SK-N-SH (cell line): ENCODE measurements at regions of chr1 and their contacts with region 1.

Region 1: GRCh38 chr1:167442124-167442848 is 76.0 kb downstream of the CD247 start:
- DNase-seq: peak; percentile 91
- H3K4me3 ChIP-seq: peak overlapping the region in 1 of 2 experiments; percentile 42; a peak in 1 of 4 replicates
- H3K27ac ChIP-seq: no peak overlapping the region
- H3K4me1 ChIP-seq: peaks cover 0 to 7% of the 10 kb centered on the region in 2 experiments; a peak in 1 of 4 replicates
- H3K27me3 ChIP-seq: no peaks in the 10 kb centered on the region; the same call in 1 of the 2 replicates
- CTCF ChIP-seq: peak; percentile 89
- EP300 ChIP-seq: no peak
- RAD21 ChIP-seq: peak; percentile 94

Region 2: DNA sequence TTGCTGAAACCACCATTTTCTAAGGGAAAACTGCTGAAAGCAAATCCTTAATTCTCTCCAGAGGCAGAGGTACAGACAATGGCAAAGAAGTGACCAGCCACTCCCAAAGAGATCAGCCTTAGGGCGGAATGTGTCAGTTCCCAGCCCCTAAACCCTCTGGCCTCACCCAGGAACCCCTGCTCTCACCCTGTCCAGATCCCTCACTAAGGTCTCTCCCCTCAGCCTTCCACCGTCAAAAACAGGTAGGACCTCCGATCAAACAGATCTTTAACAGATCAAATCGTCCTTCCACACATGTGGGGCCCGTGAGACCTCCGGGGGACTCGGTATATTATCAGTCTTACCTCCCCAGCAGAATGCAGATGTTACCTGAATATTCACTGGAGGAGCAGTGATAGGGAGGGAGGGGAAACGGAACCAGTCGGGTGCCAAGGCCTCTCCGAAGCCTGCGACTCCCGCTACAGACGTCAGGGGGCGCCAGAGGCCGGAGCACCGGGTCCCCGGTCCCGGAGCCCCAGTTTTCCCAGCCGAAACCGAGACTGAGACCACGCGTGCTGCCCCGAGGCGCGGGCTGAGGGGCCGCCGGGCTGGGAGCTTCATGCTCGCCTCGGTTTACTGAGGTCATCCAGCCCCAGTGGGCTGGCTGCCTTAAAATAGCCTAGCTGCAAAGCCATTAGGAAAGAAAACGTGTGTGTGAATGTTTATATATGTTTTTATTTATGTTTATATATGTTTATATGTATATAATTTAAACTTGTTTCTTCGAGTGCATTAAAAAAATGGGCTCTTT is 375.8 kb before region 1 on chr1:
- CTCF ChIA-PET with region 1: interaction called, 32 read pairs
- POLR2A ChIA-PET with region 1: no interaction called
- DNase-seq: peak; percentile 91
- H3K4me3 ChIP-seq: peak overlapping the region; percentile 30 to 47; a peak in 3 of 4 replicates
- H3K27ac ChIP-seq: no peak overlapping the region
- H3K4me1 ChIP-seq: no peaks in the 10 kb centered on the region; a peak in 2 of 4 replicates
- H3K27me3 ChIP-seq: no peaks in the 10 kb centered on the region; the same call in 1 of the 2 replicates
- CTCF ChIP-seq: peak; percentile 94
- EP300 ChIP-seq: no peak
- RAD21 ChIP-seq: peak; percentile 96

Region 3: GRCh38 chr1:167263819-167264464 is 178.3 kb before region 1 on chr1:
- CTCF ChIA-PET with region 1: interaction called, 110 read pairs
- POLR2A ChIA-PET with region 1: no interaction called
- DNase-seq: no peak
- H3K4me3 ChIP-seq: no peak overlapping the region
- H3K27ac ChIP-seq: no peak overlapping the region
- H3K4me1 ChIP-seq: peaks cover 0 to 3% of the 10 kb centered on the region in 2 experiments; a peak in 2 of 4 replicates
- H3K27me3 ChIP-seq: no peaks in the 10 kb centered on the region
- CTCF ChIP-seq: no peak
- EP300 ChIP-seq: no peak
- RAD21 ChIP-seq: no peak

Region 4: GRCh38 chr1:167360120-167360519 is 82.2 kb before region 1 on chr1:
- CTCF ChIA-PET with region 1: no interaction called
- POLR2A ChIA-PET with region 1: no interaction called
- DNase-seq: no peak
- H3K4me3 ChIP-seq: no peak overlapping the region
- H3K27ac ChIP-seq: no peak overlapping the region
- H3K4me1 ChIP-seq: peaks cover 0 to 2% of the 10 kb centered on the region in 2 experiments; a peak in 1 of 4 replicates
- H3K27me3 ChIP-seq: no peaks in the 10 kb centered on the region
- CTCF ChIP-seq: no peak
- EP300 ChIP-seq: no peak
- RAD21 ChIP-seq: no peak

Region 5: DNA sequence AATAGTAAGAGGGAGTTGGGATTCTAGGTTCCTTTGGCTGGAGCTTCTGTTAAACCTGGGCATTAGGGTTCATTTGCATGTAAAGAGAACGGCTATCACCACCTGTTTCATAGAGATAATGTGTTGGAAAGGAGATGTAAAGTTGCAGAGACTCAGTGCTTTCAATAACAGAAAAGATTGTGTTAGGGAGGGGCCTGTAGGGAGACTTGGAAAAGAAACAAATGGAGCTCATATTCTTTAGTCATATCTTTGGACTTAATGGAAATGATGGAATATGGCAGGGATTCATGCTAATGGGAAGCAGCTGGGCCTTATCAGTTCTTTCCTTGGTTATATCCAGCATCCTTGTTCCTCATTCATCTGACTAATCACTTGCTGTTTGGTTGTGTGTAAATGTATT is 68.9 kb before region 1 on chr1:
- CTCF ChIA-PET with region 1: interaction called, 13 read pairs
- POLR2A ChIA-PET with region 1: no interaction called
- DNase-seq: peak; percentile 65
- H3K4me3 ChIP-seq: no peak overlapping the region; a peak in 1 of 4 replicates
- H3K27ac ChIP-seq: peak overlapping the region in 1 of 2 experiments; percentile 78; a peak in 2 of 4 replicates
- H3K4me1 ChIP-seq: peaks cover 0 to 7% of the 10 kb centered on the region in 2 experiments; a peak in 2 of 4 replicates
- H3K27me3 ChIP-seq: no peaks in the 10 kb centered on the region
- CTCF ChIP-seq: no peak
- EP300 ChIP-seq: peak in 1 of 2 experiments; percentile 66; a peak in 2 of 4 replicates
- RAD21 ChIP-seq: no peak; the same call in 1 of the 2 replicates

Region 6: GRCh38 chr1:167401260-167401873 is 40.9 kb before region 1 on chr1:
- CTCF ChIA-PET with region 1: interaction called, 35 read pairs
- POLR2A ChIA-PET with region 1: no interaction called
- DNase-seq: peak; percentile 48
- H3K4me3 ChIP-seq: no peak overlapping the region
- H3K27ac ChIP-seq: no peak overlapping the region
- H3K4me1 ChIP-seq: no peaks in the 10 kb centered on the region; a peak in 2 of 4 replicates
- H3K27me3 ChIP-seq: no peaks in the 10 kb centered on the region
- CTCF ChIP-seq: peak; percentile 65
- EP300 ChIP-seq: no peak
- RAD21 ChIP-seq: peak; percentile 79

Region 7: GRCh38 chr1:167454894-167455785 is 12.9 kb after region 1 on chr1:
- CTCF ChIA-PET with region 1: interaction called, 45 read pairs
- POLR2A ChIA-PET with region 1: interaction called, 4 read pairs
- DNase-seq: peak; percentile 87
- H3K4me3 ChIP-seq: peak overlapping the region; percentile 62 to 87
- H3K27ac ChIP-seq: peak overlapping the region in 1 of 2 experiments; percentile 45; a peak in 1 of 4 replicates
- H3K4me1 ChIP-seq: peaks cover 0 to 8% of the 10 kb centered on the region in 2 experiments; a peak in 1 of 4 replicates
- H3K27me3 ChIP-seq: peaks cover 6% of the 10 kb centered on the region; the same call in 1 of the 2 replicates
- CTCF ChIP-seq: no peak
- EP300 ChIP-seq: no peak
- RAD21 ChIP-seq: no peak

Region 8: GRCh38 chr1:168767894-168768584 is 1325.8 kb after region 1 on chr1:
- CTCF ChIA-PET with region 1: no interaction called
- POLR2A ChIA-PET with region 1: no interaction called
- DNase-seq: no peak
- H3K4me3 ChIP-seq: no peak overlapping the region
- H3K27ac ChIP-seq: peak overlapping the region; percentile 12 to 66; a peak in 2 of 4 replicates
- H3K4me1 ChIP-seq: peaks cover 0 to 8% of the 10 kb centered on the region in 2 experiments; a peak in 2 of 4 replicates
- H3K27me3 ChIP-seq: no peaks in the 10 kb centered on the region
- CTCF ChIP-seq: no peak
- EP300 ChIP-seq: no peak
- RAD21 ChIP-seq: no peak